ENCODE measurements at regions of chr10 and their contacts with region 1.

Region 1: GRCh38 chr10:21278491-21279239 is 246.8 kb downstream of the SKIDA1 start:
- H3K4me3 ChIP-seq: no peak overlapping the region
- H3K27ac ChIP-seq: no peak overlapping the region
- H3K4me1 ChIP-seq: peaks cover 3% of the 10 kb centered on the region; the same call in 1 of the 2 replicates
- CTCF ChIP-seq: peak; percentile 74

Region 2: DNA sequence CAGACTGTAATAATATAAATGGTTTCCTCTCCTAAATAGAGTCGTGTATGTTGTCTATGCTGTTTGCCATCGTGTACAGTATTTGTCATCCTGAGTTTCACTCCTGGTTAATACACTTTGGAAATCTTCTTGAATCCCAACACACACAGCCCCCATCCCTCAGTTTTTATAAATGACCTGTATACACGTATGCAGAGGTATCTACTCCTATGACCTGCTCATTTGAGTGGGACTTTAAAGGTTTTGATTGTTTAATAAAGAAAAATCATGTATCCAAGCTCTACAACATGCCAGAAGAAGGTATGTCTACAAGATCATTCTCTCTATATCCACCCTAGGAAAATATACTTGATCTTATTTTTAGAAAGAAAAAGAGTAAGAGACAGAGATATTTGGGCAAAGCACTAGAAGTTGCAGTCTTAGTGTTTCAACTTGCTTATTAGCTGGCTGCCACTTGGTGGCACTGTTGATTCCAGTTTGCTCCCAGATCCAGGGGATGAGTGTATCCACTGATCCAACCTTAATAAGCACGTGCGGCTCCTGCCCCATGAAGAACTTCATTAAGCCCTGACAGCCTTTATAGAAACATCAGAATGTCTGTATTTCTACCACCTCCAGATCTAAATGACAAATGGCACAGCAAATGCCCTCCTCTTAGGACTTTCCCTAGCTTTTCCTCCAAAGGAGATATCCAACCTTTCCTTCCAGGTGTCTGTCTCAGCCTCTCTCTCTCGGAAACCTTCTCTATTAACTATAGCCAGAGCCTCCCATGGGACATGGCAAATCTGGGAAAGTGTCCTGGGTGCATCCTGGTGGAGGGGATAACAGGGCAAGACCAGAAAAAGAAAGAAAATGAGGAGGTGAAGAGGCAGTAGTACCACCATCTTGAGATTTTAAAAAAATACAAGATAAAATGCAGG is 200.0 kb before region 1 on chr10:
- CTCF ChIA-PET with region 1: interaction called, 82 read pairs
- POLR2A ChIA-PET with region 1: no interaction called
- H3K4me3 ChIP-seq: no peak overlapping the region
- H3K27ac ChIP-seq: no peak overlapping the region
- H3K4me1 ChIP-seq: peaks cover 3% of the 10 kb centered on the region; the same call in 1 of the 2 replicates
- CTCF ChIP-seq: peak; percentile 59; the same call in 1 of the 2 replicates

Region 3: DNA sequence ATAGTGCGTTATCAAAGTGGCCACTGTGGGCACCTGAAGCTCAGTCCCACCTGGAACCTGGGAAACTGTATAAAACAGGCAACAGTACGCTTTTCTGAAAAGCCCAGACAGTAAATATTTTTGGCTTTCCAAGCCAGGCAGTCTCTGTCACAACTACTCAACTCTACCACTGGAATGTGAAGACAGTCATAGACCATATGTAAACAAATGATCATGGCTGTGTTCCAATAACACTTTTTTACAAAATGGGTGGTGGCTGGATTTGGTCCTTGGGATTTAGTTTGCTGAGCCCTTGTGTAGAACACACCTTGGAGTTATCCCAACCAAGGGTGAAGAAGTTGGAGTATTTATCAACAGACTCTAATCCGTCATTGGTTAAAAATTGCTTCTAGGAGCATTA is 13.0 kb before region 1 on chr10:
- CTCF ChIA-PET with region 1: no interaction called
- POLR2A ChIA-PET with region 1: no interaction called
- H3K4me3 ChIP-seq: no peak overlapping the region
- H3K27ac ChIP-seq: no peak overlapping the region
- H3K4me1 ChIP-seq: no peaks in the 10 kb centered on the region
- CTCF ChIP-seq: no peak

Region 4: DNA sequence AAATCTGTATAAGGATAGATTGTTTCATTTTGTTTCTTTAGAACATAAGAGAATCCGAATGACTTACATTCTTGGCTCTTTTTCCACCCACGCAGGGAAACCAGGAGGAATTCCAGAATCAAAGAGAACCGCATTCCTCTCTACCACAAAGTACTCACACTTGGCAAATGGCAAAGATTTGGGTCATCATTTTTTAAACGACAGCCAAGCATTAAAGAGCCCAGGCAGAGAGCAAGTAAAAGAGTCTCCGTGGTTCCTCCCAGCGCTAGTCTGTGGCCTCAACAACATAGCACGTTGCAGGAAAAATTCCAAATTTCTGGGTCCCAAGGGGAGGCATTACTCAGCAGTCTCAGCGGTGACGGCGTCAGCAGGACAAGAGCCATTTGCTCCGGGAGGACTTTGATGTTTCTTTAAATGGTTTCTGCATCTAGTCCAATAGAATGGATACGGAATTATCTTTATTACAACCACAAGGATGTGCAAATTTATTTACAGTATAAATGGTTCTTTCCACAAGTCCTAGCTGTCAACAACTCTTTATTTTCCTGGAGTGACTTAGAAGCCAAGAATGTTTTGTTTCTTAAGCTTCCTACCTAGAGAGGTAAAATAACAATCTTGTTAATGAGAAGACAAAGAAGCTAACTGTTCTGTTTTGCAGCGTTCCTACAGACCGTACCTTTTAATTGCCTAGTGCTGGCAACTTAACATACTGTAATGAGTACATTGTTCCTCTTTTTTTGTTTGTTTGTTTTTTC is 14.3 kb after region 1 on chr10:
- CTCF ChIA-PET with region 1: interaction called, 11 read pairs
- POLR2A ChIA-PET with region 1: no interaction called
- H3K4me3 ChIP-seq: no peak overlapping the region
- H3K27ac ChIP-seq: no peak overlapping the region; the same call in 1 of the 2 replicates
- H3K4me1 ChIP-seq: peaks cover 16% of the 10 kb centered on the region
- CTCF ChIP-seq: no peak

Region 5: DNA sequence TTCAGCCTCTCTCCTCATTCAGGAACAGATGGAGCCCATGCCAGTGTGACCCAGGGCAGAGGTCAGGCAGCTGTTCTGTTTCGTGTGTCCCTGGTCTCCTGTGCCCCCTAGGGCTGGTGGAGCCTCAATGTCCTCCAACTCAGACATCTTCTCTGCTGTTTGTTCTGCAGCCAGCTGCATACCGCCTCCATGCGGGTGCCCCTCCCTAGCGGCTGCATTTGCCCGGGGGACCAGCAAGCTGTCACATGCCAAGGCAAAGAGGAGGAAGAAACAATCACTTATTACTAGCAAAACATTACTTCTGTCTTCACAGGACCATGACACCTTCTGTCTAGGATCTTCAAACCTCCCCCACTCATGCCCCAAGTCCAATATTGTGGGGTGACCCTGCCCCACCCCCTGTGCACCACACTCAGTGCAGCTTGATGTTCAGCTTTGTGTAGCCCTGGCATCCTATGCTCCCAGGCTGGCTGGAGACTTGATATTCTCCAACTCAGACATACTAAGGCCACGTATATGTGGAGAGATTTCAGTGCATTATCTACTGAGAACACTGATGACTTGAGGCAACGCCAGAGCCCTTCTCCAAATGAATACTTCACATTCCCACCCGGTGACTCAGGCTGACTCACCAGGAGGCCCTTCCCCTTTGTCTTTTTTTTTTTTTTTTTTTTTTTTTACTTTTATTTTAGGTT is 58.0 kb after region 1 on chr10:
- CTCF ChIA-PET with region 1: interaction called, 11 read pairs
- POLR2A ChIA-PET with region 1: no interaction called
- H3K4me3 ChIP-seq: no peak overlapping the region
- H3K27ac ChIP-seq: no peak overlapping the region
- H3K4me1 ChIP-seq: 0 out of 2 replicates have a peak, but pooled peaks cover 5% of the 10 kb centered on the region
- CTCF ChIP-seq: peak; percentile 63

Measured in HEK293 (cell line).